ENCODE measurements at regions of chr10 and their contacts with region 1.

Region 1: DNA sequence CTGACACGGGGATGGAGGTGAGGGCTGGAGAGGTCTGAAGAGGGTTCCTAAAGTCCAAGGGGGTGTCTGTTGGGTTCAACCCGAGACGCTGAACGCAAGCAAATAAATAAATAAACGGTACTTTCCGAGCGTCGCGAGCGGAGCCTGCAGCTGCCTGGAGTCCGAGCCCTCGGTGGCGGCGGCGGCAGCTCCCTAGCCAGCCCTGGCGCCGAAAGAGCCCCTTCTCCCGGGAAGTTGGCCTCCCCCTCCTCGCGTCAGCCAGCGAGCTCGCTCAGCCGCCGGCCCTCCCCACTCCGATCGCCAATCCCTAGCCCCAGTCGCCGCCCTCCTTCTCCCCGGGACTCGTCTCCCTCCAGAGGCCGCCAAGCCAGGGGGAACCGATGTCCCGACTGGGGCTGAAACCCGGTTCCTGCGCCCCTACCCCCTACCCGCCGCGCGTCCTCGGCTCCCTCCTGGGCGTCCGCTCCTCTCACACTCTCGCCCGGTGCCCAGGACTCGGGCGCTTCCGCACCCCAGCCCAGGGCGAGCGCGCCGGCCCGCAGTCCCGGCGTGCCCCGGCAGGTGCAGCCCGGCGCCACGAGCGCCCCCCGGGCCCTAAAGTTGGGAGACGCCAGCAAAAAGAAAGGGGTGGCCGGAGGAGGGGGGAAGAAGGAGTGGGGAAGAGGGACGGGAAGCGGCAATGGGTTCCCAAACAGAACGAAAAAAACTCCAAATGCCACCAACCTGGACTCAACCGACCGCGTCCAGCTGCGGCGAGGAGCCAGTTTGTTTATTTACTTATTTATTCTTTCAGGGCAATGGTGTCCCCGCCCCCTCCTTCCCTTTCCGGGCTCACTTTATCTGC is at the start of gene GFRA1:
- DNase-seq: peak; percentile 7
- ATAC-seq: peak; percentile 38
- H3K4me3 ChIP-seq: peak within 1 kb of the TSS; percentile 47
- H3K27ac ChIP-seq: no peak within 1 kb of the TSS
- H3K4me1 ChIP-seq: no peaks in the 10 kb centered on the region; the same call in 1 of the 2 replicates
- H3K27me3 ChIP-seq: peaks cover 50% of the 10 kb centered on the region
- CTCF ChIP-seq: 0 out of 2 replicates have a peak, but pooled peaks have one; percentile 5
- POLR2A ChIP-seq: no peak
- RAD21 ChIP-seq: no peak; the same call in 1 of the 2 replicates
- total RNA-seq, gene GFRA1: 8.6 and 9.1 TPM in 2 replicates

Region 2: DNA sequence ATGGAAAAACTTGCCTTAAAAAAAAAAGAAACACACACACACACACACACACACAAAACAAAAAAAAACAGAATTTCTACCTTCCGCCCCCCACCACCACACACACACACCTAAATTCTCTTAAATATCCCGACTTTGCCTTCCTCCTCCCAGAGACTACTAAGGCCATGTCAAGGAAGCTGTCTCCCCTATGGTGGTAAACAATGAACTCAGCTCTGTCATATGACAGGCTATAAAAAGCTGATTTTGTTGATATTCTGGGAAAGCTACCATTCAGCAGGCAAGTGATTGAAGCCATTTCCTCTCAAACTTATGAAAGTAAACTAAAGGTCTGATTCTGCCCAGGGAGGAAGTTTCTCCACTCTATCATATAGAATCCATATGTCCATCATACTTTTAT is 470.7 kb before region 1 on chr10:
- CTCF ChIA-PET with region 1: interaction called, 5 read pairs
- POLR2A ChIA-PET with region 1: interaction called, 4 read pairs
- dilution Hi-C with region 1: no loop called
- in situ Hi-C with region 1: no loop called
- intact Hi-C with region 1: loop called (anchors 1 kb)
- DNase-seq: peak; percentile 3
- ATAC-seq: no peak
- H3K4me3 ChIP-seq: no peak overlapping the region
- H3K27ac ChIP-seq: no peak overlapping the region
- H3K4me1 ChIP-seq: no peaks in the 10 kb centered on the region
- H3K27me3 ChIP-seq: no peaks in the 10 kb centered on the region
- CTCF ChIP-seq: no peak
- POLR2A ChIP-seq: no peak
- RAD21 ChIP-seq: no peak

Region 3: GRCh38 chr10:115948465-115948864 is 324.2 kb before region 1 on chr10:
- CTCF ChIA-PET with region 1: interaction called, 4 read pairs
- POLR2A ChIA-PET with region 1: no interaction called
- dilution Hi-C with region 1: no loop called
- in situ Hi-C with region 1: no loop called
- intact Hi-C with region 1: loop called (anchors 2 kb)
- DNase-seq: peak; percentile 33
- ATAC-seq: peak; percentile 22
- H3K4me3 ChIP-seq: no peak overlapping the region
- H3K27ac ChIP-seq: no peak overlapping the region
- H3K4me1 ChIP-seq: peaks cover 16% of the 10 kb centered on the region
- H3K27me3 ChIP-seq: no peaks in the 10 kb centered on the region
- CTCF ChIP-seq: peak; percentile 42
- POLR2A ChIP-seq: no peak
- RAD21 ChIP-seq: no peak

Region 4: DNA sequence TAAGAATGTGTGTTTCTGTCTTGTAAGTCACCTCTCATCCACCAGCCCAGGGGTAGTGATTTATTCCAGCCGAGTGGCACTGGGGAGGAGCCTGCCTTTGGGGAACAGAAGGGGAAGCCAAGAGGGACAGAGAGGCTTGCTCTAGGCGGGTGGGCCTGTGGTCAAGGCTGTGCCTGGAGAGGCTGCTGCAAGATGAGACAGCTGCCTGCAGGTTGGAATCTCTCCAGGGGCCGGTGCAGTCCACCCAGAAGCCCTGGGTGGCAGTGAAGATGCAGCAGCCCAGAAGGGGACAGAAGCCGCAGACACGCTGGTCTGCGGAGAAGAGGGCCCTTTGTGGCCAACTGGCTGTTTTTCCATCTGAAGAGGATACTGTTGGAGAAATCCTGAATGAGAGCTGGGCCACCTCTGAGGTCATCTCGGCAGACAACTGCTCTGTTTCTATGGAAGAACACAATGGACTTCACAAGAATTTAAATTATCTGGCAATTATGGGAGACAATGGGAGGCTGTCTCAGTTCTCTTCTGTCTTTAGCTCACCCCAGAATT is 175.3 kb before region 1 on chr10:
- CTCF ChIA-PET with region 1: no interaction called
- POLR2A ChIA-PET with region 1: no interaction called
- dilution Hi-C with region 1: no loop called
- in situ Hi-C with region 1: no loop called
- intact Hi-C with region 1: loop called (anchors 10 kb)
- DNase-seq: no peak
- ATAC-seq: no peak
- H3K4me3 ChIP-seq: no peak overlapping the region
- H3K27ac ChIP-seq: no peak overlapping the region
- H3K4me1 ChIP-seq: no peaks in the 10 kb centered on the region
- H3K27me3 ChIP-seq: no peaks in the 10 kb centered on the region
- CTCF ChIP-seq: no peak
- POLR2A ChIP-seq: no peak
- RAD21 ChIP-seq: no peak

Region 5: DNA sequence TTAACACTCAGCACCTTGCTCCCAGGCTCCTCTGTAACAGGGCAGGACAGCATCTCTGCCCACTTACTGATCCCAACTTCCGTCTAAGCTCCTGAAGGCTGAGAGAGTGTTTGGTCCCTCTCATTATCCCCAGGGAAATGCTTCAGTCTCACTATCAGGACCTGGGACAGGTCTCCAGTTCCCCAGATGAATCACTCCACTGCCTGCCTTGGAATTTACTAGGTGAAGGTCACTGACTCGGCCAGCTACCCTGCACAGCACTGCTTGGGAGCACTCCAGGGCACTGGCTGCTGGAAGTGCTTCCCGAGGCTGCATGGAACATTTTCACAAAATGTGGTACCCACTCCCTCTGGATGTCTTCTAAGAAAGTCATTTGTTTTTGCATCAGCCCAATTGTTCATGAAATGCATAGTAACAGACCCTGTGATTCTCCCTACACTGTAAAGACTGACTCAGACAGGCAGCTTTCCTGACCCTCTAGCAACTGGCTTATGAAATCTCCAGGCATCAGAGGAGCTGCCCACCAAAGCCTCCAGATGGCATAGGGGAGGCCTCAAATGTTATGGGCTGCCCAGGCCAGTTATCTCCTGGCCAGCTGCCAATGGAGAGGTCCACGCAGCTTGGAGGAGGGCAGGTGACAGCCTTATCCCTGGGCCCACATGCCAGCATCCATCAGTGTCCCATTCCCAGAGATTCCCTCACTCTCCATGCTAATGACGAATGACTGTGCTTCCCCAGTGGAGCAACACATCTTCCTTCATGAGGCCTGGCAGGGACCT is 88.7 kb before region 1 on chr10:
- CTCF ChIA-PET with region 1: no interaction called
- POLR2A ChIA-PET with region 1: no interaction called
- dilution Hi-C with region 1: no loop called
- in situ Hi-C with region 1: no loop called
- intact Hi-C with region 1: loop called (anchors 10 kb)
- DNase-seq: peak; percentile 29
- ATAC-seq: peak; percentile 97
- H3K4me3 ChIP-seq: no peak overlapping the region
- H3K27ac ChIP-seq: no peak overlapping the region
- H3K4me1 ChIP-seq: no peaks in the 10 kb centered on the region
- H3K27me3 ChIP-seq: no peaks in the 10 kb centered on the region
- CTCF ChIP-seq: no peak
- POLR2A ChIP-seq: no peak
- RAD21 ChIP-seq: no peak

Region 6: DNA sequence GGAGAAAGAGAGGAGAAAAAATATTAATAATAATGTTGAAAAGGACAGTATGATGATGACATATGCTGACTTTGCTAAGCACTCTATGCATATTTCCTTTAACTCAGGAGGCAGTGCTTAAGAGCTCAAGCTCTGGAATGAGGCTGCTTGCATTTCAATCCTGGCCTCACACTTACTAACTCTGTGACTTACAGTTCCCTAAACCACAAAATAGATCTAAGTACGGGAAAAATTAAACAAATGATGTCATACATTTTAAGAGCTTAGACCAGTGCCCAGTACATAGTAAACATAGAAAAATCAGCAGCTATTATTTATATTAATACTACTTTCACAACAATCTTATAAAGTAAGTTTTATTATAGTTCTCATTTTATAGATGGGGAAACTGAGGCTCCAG is 61.0 kb before region 1 on chr10:
- CTCF ChIA-PET with region 1: interaction called, 3 read pairs
- POLR2A ChIA-PET with region 1: no interaction called
- dilution Hi-C with region 1: no loop called
- in situ Hi-C with region 1: no loop called
- intact Hi-C with region 1: loop called (anchors 2 kb)
- DNase-seq: peak; percentile 91
- ATAC-seq: peak; percentile 97
- H3K4me3 ChIP-seq: no peak overlapping the region
- H3K27ac ChIP-seq: no peak overlapping the region
- H3K4me1 ChIP-seq: peaks cover 8% of the 10 kb centered on the region
- H3K27me3 ChIP-seq: no peaks in the 10 kb centered on the region
- CTCF ChIP-seq: no peak
- POLR2A ChIP-seq: no peak
- RAD21 ChIP-seq: no peak

Region 7: GRCh38 chr10:116232613-116233012 is 40.0 kb before region 1 on chr10:
- CTCF ChIA-PET with region 1: no interaction called
- POLR2A ChIA-PET with region 1: no interaction called
- dilution Hi-C with region 1: no loop called
- in situ Hi-C with region 1: no loop called
- intact Hi-C with region 1: no loop called
- DNase-seq: no peak
- ATAC-seq: no peak
- H3K4me3 ChIP-seq: no peak overlapping the region
- H3K27ac ChIP-seq: no peak overlapping the region
- H3K4me1 ChIP-seq: no peaks in the 10 kb centered on the region
- H3K27me3 ChIP-seq: no peaks in the 10 kb centered on the region
- CTCF ChIP-seq: no peak
- POLR2A ChIP-seq: no peak
- RAD21 ChIP-seq: no peak

Region 8: DNA sequence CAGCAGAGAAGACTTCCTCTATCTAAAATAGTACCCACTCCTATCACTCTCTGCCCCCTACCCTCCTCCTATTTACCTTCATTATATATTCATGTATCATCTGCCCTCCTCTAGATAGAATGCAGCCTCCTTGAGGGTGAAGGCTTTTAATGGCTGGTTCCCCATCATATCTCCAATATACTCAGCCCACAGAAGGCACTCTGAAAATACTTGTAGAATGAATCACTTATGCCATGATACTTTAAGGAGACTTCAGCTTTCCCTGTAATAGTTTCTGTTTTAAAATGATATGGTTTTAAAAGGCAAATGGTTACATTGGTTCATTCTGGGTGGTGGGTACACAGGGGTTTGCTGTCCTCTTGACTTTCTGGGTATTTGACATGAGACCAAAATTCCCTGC is 25.0 kb before region 1 on chr10:
- CTCF ChIA-PET with region 1: no interaction called
- POLR2A ChIA-PET with region 1: no interaction called
- dilution Hi-C with region 1: no loop called
- in situ Hi-C with region 1: no loop called
- intact Hi-C with region 1: no loop called
- DNase-seq: peak; percentile 4
- ATAC-seq: peak; percentile 90
- H3K4me3 ChIP-seq: no peak overlapping the region
- H3K27ac ChIP-seq: no peak overlapping the region
- H3K4me1 ChIP-seq: no peaks in the 10 kb centered on the region
- H3K27me3 ChIP-seq: no peaks in the 10 kb centered on the region
- CTCF ChIP-seq: no peak
- POLR2A ChIP-seq: no peak
- RAD21 ChIP-seq: no peak